CD4-positive, alpha-beta memory T cell (primary cell): ENCODE measurements at regions of chr17 and their contacts with region 1.

Region 1: DNA sequence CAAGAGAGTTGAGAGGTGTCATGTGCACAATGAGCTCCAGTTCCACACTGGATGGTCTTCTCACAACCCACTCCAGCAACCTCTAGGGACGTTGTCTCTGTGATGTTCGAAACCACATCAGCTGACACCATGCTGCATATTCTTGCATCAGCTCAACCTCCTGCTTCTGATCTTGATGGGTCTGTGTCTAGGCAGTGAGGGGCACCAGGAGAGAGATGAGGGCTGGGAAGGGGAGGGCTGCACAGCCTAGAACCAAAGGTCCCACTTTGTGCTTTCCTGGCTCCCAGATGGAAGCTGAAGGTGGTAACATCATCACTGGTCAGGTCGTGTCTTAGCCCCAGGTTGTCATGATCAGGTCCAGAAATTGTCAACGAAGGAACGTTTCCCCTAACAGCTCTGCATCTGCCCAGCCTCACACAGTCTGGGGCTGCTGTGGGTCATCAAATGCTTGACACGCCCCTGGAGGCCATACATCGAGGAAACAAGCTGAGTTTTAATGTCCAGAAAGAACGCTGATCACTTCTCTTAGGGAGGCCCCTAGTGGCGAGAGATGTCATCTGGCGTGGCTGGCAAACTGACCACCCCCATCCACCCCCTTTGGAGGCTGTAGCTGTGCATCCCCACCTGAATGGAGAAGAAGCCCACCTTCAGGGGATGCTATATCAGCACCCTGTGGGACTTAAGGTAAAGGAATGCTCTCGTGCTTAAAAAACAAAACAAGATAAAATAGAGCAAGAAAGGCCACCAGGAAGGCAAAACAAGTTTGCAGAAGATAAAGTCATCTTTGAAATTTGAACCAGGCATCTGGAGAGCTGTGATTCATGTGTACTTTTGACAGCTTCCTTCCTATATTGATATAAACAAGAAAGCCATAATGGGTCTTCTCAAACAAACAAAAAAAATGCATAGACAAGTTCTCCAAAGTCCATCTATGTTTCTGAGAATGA is 58.3 kb downstream of the WIPI1 start:
- DNase-seq: no peak
- H3K4me3 ChIP-seq: no peak overlapping the region
- H3K4me3 Mint-ChIP-seq: peak overlapping the region in 5 of 8 donors; percentile 5 to 61 (median 40)
- H3K27ac ChIP-seq: no peak overlapping the region
- H3K27ac Mint-ChIP-seq: peak overlapping the region in 5 of 7 donors; percentile 46 to 79 (median 60)
- H3K4me1 ChIP-seq: peaks cover 38% of the 10 kb centered on the region
- H3K4me1 Mint-ChIP-seq: peaks cover 27 to 44% (median 34%) of the 10 kb centered on the region in 4 donors
- H3K27me3 ChIP-seq: no peaks in the 10 kb centered on the region
- H3K27me3 Mint-ChIP-seq: no peaks in the 10 kb centered on the region

Region 2: DNA sequence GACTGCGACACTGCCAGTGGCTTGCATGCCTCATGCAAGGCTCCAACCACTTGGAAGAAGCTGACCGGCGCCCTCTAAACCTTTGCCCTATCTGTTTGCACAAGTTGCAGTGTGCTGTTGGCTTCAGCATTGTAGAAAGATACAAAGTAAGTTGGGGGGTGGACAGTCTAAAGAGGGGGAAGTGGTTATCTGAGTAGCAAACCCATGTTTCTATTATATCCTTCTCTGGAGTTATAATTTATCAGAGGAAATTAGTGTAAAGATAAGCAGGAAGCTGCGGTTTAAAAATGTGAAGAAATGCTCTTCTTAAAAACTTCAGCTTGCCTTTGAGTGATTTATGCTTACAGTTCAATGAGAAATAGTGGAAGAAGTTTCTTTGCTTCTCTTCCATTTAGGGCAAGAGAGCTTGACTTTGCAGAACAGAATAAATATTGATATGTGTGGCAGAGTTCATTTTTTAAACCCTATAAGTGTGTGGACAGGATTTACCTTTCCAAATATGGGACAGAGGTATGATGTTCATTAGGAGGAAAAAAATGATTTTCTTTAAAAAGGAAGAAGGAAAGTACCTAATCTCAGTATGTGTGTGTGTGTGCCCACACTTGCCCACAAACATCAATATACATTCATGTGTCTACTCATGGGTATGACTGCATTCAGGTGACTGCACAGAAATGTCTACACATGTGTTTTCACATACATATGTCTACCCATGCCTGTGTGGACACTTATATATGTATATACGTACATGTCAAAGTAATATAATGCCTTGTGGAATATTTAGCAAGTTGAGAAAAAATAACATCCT is 143.0 kb before region 1 on chr17:
- CTCF ChIA-PET with region 1: interaction called, 60 read pairs
- POLR2A ChIA-PET with region 1: no interaction called
- intact Hi-C with region 1: no loop called
- DNase-seq: peak; percentile 50 to 73 (median 60)
- H3K4me3 ChIP-seq: no peak overlapping the region
- H3K4me3 Mint-ChIP-seq: peak overlapping the region; percentile 46 to 73 (median 66)
- H3K27ac ChIP-seq: peak overlapping the region; percentile 88
- H3K27ac Mint-ChIP-seq: peak overlapping the region; percentile 81 to 99 (median 98)
- H3K4me1 ChIP-seq: peaks cover 86% of the 10 kb centered on the region
- H3K4me1 Mint-ChIP-seq: peaks cover 61 to 85% (median 72%) of the 10 kb centered on the region in 4 donors
- H3K27me3 ChIP-seq: no peaks in the 10 kb centered on the region
- H3K27me3 Mint-ChIP-seq: no peaks in the 10 kb centered on the region

Region 3: GRCh38 chr17:68356520-68356919 is 42.4 kb before region 1 on chr17:
- CTCF ChIA-PET with region 1: interaction called, 6 read pairs
- POLR2A ChIA-PET with region 1: interaction called, 5 read pairs
- intact Hi-C with region 1: loop called (anchors 5 kb)
- DNase-seq: peak; percentile 81 to 86 (median 83)
- H3K4me3 ChIP-seq: peak overlapping the region in 1 of 2 donors; percentile 21
- H3K4me3 Mint-ChIP-seq: peak overlapping the region; percentile 72 to 90 (median 78)
- H3K27ac ChIP-seq: peak overlapping the region; percentile 41
- H3K27ac Mint-ChIP-seq: peak overlapping the region; percentile 77 to 94 (median 92)
- H3K4me1 ChIP-seq: peaks cover 63% of the 10 kb centered on the region
- H3K4me1 Mint-ChIP-seq: peaks cover 37 to 70% (median 54%) of the 10 kb centered on the region in 4 donors
- H3K27me3 ChIP-seq: no peaks in the 10 kb centered on the region
- H3K27me3 Mint-ChIP-seq: no peaks in the 10 kb centered on the region

Region 4: GRCh38 chr17:68383443-68384321 is 15.3 kb before region 1 on chr17:
- CTCF ChIA-PET with region 1: interaction called, 25 read pairs
- POLR2A ChIA-PET with region 1: interaction called, 4 read pairs
- intact Hi-C with region 1: no loop called
- DNase-seq: peak in 3 of 5 donors; percentile 26 to 28 (median 27)
- H3K4me3 ChIP-seq: peak overlapping the region in 1 of 2 donors; percentile 20
- H3K4me3 Mint-ChIP-seq: peak overlapping the region; percentile 43 to 83 (median 66)
- H3K27ac ChIP-seq: no peak overlapping the region
- H3K27ac Mint-ChIP-seq: peak overlapping the region; percentile 13 to 86 (median 67)
- H3K4me1 ChIP-seq: peaks cover 26% of the 10 kb centered on the region
- H3K4me1 Mint-ChIP-seq: peaks cover 22 to 43% (median 27%) of the 10 kb centered on the region in 4 donors
- H3K27me3 ChIP-seq: no peaks in the 10 kb centered on the region
- H3K27me3 Mint-ChIP-seq: no peaks in the 10 kb centered on the region